HepG2 (cell line): ENCODE measurements at regions of chr6 and their contacts with region 1.

Region 1: DNA sequence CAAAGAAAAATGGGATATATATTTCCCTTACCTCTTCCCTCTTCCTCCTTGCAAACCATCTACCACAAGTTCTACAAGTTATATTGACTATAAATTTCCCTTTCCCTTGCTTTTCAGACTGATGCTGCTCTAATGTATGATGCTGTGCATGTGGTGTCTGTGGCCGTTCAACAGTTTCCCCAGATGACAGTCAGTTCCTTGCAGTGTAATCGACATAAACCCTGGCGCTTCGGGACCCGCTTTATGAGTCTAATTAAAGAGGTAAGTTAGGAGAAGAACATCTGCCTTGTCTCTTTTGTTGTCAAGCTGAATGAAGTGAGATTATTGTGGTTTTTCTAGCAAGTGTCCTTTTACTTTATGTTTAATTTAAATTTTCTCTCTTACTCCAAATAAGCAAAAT is 406.0 kb downstream of the GRIK2 start:
- DNase-seq: no peak
- ATAC-seq: no peak
- H3K4me3 ChIP-seq: no peak overlapping the region
- H3K27ac ChIP-seq: no peak overlapping the region
- H3K4me1 ChIP-seq: no peaks in the 10 kb centered on the region
- H3K27me3 ChIP-seq: no peaks in the 10 kb centered on the region
- CTCF ChIP-seq: no peak
- EP300 ChIP-seq: no peak
- POLR2A ChIP-seq: no peak
- RAD21 ChIP-seq: no peak

Region 2: DNA sequence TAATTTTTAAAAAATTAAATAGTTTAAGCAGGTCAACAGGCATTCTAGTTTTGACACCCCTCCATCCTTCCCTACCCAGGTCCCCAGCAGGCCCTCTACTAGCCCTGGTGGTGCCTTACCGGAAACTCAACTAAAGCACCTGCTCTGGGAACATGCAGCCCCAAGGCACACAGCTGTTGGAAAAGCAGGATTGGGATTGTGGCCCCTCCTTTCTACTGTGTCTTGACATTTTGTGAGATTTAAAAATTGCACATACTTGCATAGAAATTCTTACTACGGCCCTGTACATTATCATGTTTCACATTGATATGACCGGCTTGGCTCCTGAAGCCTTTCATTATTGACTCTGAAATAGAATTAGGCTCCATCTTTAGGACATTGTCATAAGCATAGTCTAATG is 17.2 kb after region 1 on chr6:
- CTCF ChIA-PET with region 1: no interaction called
- POLR2A ChIA-PET with region 1: no interaction called
- in situ Hi-C with region 1: no loop called
- intact Hi-C with region 1: loop called (anchors 1 kb)
- DNase-seq: no peak
- ATAC-seq: no peak
- H3K4me3 ChIP-seq: no peak overlapping the region
- H3K27ac ChIP-seq: no peak overlapping the region
- H3K4me1 ChIP-seq: no peaks in the 10 kb centered on the region
- H3K27me3 ChIP-seq: no peaks in the 10 kb centered on the region
- CTCF ChIP-seq: no peak
- EP300 ChIP-seq: no peak
- POLR2A ChIP-seq: no peak
- RAD21 ChIP-seq: no peak

Region 3: DNA sequence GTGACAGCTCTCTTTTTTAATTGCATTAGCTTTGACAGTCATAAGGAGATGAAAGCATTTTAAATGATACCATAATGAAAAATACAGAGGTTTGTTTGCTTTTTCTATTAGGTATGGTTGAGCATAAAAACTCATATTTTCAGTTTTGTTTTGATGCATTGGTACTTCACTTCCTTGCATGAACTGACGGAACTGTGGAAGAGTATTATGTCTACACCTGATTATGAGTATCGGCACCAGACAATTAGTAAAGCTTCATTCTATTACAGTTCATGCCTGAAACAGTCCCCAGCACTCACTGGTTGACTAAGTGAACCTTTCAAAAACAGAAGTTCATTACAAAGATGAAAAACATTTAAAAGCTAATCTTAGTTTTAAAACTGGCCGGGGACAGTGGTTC is 186.9 kb after region 1 on chr6:
- CTCF ChIA-PET with region 1: no interaction called
- POLR2A ChIA-PET with region 1: no interaction called
- in situ Hi-C with region 1: no loop called
- intact Hi-C with region 1: no loop called
- DNase-seq: no peak
- ATAC-seq: no peak
- H3K4me3 ChIP-seq: no peak overlapping the region
- H3K27ac ChIP-seq: no peak overlapping the region
- H3K4me1 ChIP-seq: no peaks in the 10 kb centered on the region
- H3K27me3 ChIP-seq: no peaks in the 10 kb centered on the region; a peak in 1 of 5 replicates
- CTCF ChIP-seq: no peak
- EP300 ChIP-seq: no peak
- POLR2A ChIP-seq: no peak
- RAD21 ChIP-seq: no peak